HEK293T (cell line): ENCODE measurements at regions of chr15 and their contacts with region 1.

Region 1: DNA sequence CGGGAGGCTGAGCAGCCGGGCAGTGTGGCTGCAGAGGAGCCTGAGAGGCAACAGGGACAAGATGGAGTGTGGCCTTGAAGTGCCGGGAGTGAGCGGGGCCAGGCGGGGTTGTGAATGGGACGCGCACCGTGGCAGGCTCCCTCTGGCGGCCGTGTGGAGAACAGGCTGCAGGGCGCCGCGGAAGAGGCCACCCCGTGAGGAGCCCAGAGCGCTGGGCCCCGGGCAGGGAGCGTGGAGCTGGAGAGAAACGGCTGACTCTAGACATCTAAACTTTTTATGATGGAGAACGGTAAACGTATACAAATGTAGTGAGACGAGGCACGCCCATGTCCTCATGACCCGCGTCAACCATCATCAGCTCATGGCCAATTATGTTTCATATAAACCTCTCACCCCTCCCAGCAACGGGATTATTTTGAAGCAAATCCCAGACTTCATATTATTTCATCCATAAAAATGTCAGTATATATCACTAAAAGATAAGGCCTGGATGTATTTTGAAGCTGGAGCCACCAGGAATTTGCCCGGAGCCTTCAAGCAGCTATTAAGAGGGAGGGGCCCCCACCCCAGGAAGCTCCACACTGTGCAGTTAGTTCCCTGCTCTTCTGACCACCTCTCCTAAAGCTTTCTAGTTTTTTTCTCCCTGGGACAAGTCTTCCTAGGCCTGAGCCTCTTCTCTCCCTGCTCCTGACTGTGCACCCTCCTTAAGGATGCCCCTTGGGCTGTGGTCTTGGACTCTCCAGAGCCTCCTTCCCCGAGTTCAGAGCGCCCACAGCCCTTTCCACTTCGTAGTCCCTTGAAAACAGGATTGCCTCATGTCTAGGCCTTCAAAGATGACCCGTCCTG is 149.4 kb downstream of the SMAD6 start:
- DNase-seq: peak; percentile 92

Region 2: GRCh38 chr15:66603301-66604179 is 247.9 kb before region 1 on chr15:
- CTCF ChIA-PET with region 1: interaction called, 13 read pairs
- POLR2A ChIA-PET with region 1: interaction called, 5 read pairs
- DNase-seq: peak; percentile 87

Region 3: DNA sequence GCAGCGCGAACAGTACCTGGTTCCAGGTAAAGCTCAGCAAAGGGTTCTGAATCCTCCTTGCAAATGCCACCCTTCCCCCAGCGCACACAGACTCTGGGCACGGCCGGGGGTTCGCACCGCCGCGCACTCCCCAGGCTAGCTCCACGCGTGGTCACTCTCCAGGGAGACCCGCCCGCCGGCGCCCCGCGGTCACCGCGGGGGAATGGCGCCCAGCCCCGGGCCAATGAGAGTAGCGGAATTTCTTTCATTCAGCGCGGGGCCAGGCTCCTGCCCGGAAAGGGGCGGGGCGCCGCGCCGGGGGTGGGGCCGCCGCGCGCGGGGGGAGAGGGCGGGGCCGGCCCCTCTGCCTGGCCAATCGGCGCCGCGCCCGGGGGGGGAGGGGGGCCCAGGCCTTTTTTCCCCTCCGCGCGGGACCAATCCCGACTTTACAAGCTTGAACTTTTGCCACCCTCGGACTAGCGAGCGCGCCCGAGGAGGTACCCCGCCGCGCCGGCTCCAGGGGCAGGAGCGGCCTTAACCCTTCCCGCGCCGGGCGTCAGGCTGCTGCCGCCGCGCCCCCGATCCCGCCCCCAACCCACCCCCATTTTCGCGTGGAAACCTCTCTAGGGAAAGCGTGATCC is 150.5 kb before region 1 on chr15:
- CTCF ChIA-PET with region 1: interaction called, 28 read pairs
- POLR2A ChIA-PET with region 1: interaction called, 31 read pairs
- DNase-seq: peak; percentile 93

Region 4: GRCh38 chr15:66774001-66774814 is 77.2 kb before region 1 on chr15:
- CTCF ChIA-PET with region 1: interaction called, 28 read pairs
- POLR2A ChIA-PET with region 1: interaction called, 3 read pairs
- DNase-seq: peak; percentile 85

Region 5: GRCh38 chr15:66862111-66862815 is 10.8 kb after region 1 on chr15:
- CTCF ChIA-PET with region 1: interaction called, 18 read pairs
- POLR2A ChIA-PET with region 1: interaction called, 3 read pairs
- DNase-seq: no peak

Region 6: DNA sequence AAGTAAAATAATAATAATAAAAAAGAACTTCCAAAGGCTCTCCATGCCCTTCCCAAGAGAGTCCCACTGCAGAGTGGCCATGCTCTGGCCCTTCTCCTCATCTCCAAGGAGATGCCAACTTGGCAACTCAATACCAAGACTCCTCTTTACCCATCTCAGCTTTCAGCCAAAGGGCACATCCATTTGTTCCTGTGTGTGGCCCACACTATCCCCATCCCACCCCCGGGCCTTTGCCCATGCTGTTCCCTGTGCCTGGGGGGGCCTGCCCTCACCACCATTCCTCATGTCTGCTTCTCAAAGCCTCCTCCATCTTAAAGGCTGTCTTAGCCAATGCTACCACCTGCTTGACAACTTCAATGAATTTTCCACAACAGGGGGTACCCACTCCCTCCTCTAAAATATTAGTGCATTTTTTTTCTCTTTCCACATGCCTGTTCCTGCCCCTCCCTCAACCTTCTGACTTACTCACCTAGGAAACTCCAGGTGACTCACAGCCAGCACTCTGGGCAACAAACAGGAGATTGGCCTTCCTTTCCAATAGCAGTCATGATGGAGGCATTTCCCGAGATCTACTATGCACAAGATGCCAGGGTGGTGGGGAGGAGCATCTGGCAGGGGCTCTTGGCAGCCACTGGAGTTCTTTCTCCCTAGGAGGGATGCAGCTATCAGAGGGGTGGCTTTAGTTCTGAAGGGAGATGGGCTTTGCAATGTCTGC is 104.6 kb after region 1 on chr15:
- CTCF ChIA-PET with region 1: no interaction called
- POLR2A ChIA-PET with region 1: no interaction called
- DNase-seq: no peak

Region 7: DNA sequence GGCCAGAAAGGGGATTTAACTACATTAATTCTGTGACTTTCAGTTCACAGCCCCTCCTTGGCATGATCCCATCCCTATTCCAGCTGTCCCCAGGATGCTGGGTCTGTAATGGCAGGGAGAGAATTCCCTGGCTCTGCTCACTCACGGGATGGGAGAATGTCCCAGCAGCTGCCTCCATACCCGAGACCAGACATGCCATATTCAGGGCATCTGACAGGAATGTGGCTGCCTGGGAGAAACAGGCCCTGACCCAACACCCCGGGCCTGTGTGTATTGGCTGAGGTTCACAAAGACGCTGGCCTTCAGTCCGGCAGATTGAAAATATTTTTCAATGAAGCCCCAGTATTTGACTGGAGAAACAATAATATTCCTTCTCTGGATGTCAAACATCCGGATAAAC is 130.3 kb after region 1 on chr15:
- CTCF ChIA-PET with region 1: no interaction called
- POLR2A ChIA-PET with region 1: no interaction called
- DNase-seq: peak; percentile 1